Right lobe of liver (tissue), 6 donors: ENCODE measurements at regions of chr17 and their contacts with region 1.

Region 1: DNA sequence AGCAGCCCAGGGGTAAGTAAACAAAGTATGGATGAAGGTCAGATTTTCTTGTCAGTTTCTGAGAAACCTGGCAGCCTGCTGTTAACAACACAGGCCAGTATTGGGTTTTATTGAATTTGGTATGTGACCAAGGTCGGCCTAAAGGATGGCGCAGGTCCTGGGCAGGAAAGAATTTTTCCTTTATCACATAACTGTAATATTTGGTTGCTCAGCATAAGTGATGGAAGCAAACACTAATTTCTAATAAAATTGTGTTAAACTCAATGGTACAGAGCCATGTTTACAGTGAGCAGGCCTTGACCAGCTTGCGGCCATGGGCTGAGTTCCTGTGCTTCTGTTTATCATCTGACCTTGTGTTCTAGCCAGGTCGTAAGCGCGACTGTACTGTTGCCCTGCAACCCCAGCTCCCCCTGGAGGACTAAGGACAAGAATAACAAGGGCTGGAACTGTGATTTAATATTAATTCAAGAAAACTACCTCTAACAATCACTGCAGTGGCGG is 10.5 kb downstream of the POLDIP2 start:
- DNase-seq: peak; percentile 66 to 83 (median 77)
- ATAC-seq: peak; percentile 63 to 83 (median 70)
- H3K4me3 ChIP-seq: peak overlapping the region in 2 of 3 donors; percentile 22 to 34
- H3K27ac ChIP-seq: peak overlapping the region; percentile 72 to 89 (median 86)
- H3K4me1 ChIP-seq: peaks cover 3 to 62% (median 34%) of the 10 kb centered on the region in 4 donors
- H3K27me3 ChIP-seq: no peaks in the 10 kb centered on the region
- CTCF ChIP-seq: peak; percentile 46 to 65 (median 61)
- POLR2A ChIP-seq: no peak

Region 2: GRCh38 chr17:28230011-28230410 is 116.8 kb before region 1 on chr17:
- intact Hi-C with region 1: loop called in 1 of 2 experiments (anchors 10 kb)
- DNase-seq: no peak
- ATAC-seq: peak in 1 of 4 donors; percentile 30
- H3K4me3 ChIP-seq: no peak overlapping the region
- H3K27ac ChIP-seq: no peak overlapping the region
- H3K4me1 ChIP-seq: peaks cover 0 to 9% (median 0%) of the 10 kb centered on the region in 4 donors
- H3K27me3 ChIP-seq: no peaks in the 10 kb centered on the region
- CTCF ChIP-seq: no peak
- POLR2A ChIP-seq: no peak

Region 3: GRCh38 chr17:28384281-28385036 is 37.7 kb after region 1 on chr17:
- intact Hi-C with region 1: no loop called
- DNase-seq: peak; percentile 82 to 87 (median 83)
- ATAC-seq: peak; percentile 79 to 88 (median 82)
- H3K4me3 ChIP-seq: peak overlapping the region; percentile 48 to 61 (median 57)
- H3K27ac ChIP-seq: peak overlapping the region in 1 of 3 donors; percentile 21
- H3K4me1 ChIP-seq: peaks cover 0 to 25% (median 0%) of the 10 kb centered on the region in 4 donors
- H3K27me3 ChIP-seq: no peaks in the 10 kb centered on the region
- CTCF ChIP-seq: no peak
- POLR2A ChIP-seq: peak; percentile 42

Region 4: GRCh38 chr17:28446728-28447395 is 100.1 kb after region 1 on chr17:
- intact Hi-C with region 1: no loop called
- DNase-seq: no peak
- ATAC-seq: no peak
- H3K4me3 ChIP-seq: no peak overlapping the region
- H3K27ac ChIP-seq: no peak overlapping the region
- H3K4me1 ChIP-seq: peaks cover 0 to 14% (median 6%) of the 10 kb centered on the region in 4 donors
- H3K27me3 ChIP-seq: no peaks in the 10 kb centered on the region
- CTCF ChIP-seq: no peak
- POLR2A ChIP-seq: no peak